Kidney (tissue), 22 donors: ENCODE measurements at regions of chr13 and their contacts with region 1.

Region 1: GRCh38 chr13:99176309-99177276 is 24.1 kb upstream of the UBAC2 start:
- DNase-seq: peak; percentile 77 to 90 (median 87)
- H3K4me3 ChIP-seq: peak overlapping the region in 1 of 3 donors; percentile 19
- H3K27ac ChIP-seq: no peak overlapping the region
- H3K4me1 ChIP-seq: peaks cover 0 to 4% (median 0%) of the 10 kb centered on the region in 3 donors
- H3K27me3 ChIP-seq: no peaks in the 10 kb centered on the region
- CTCF ChIP-seq: peak; percentile 90

Region 2: DNA sequence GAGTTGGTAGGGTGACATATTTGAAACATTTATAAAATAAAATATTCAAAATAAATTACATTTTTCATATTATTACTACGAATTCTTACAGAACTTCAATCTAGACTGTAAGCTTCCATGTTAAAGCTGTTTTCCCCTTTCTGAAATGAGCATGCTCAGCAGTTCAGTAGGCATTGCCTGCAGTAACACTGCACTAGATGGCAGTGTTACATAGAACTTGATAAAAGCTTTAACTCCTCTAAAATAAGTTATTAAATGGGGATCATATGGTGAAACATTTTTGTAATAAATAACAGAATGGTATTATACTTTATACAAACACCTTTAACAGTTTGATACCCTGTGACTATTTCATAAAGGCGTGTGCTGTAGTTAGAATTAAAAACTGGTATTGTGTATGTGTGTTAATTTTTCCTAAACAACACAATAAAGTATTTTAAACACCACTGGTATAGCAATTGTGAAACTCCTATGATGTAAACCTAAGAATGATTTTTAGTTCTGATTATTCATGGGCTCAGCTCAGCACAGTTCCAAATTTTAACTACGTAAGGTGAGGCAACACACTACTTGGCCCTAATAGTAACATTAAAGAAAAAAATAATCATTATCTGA is 93.1 kb after region 1 on chr13:
- intact Hi-C with region 1: loop called (anchors 10 kb)
- DNase-seq: peak in 2 of 5 donors; percentile 56 to 77
- H3K4me3 ChIP-seq: no peak overlapping the region
- H3K27ac ChIP-seq: no peak overlapping the region
- H3K4me1 ChIP-seq: peaks cover 0 to 5% (median 0%) of the 10 kb centered on the region in 3 donors
- H3K27me3 ChIP-seq: no peaks in the 10 kb centered on the region
- CTCF ChIP-seq: peak; percentile 71

Region 3: DNA sequence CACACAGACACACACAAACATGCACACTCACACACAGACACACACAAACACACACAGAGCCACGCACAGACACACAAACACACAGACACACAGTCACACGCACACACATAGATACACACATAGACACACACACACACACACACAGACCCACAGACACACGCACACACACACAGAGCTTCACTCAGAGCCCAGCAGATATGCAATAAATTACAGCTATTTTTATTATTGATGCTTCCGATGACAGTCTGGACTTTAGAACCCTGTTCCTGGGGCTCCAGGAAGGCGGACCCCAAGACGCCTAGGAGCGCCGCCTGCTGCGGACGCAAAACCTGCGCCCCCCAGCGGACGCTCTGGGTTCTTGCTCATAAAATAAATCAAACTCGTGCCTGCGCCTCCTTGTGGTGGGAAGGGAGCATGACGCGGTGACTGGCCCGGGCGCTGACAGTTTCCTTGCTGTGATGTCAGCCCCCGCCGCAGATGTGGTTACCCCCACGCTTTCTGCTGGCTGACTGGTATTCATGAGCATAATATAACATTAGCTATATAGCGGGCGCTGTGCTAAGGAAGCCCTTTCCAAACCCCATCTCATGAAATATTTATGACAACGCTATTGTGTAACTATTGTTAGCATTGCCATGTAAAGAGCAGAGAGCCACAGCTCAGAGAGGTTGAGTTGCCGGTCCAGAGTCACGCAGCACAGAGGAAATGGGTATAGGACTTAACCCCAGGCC is 260.3 kb after region 1 on chr13:
- intact Hi-C with region 1: loop called (anchors 10 kb)
- DNase-seq: peak; percentile 89 to 92 (median 91)
- H3K4me3 ChIP-seq: peak overlapping the region; percentile 10 to 37 (median 23)
- H3K27ac ChIP-seq: no peak overlapping the region
- H3K4me1 ChIP-seq: peaks cover 0 to 8% (median 0%) of the 10 kb centered on the region in 3 donors
- H3K27me3 ChIP-seq: no peaks in the 10 kb centered on the region
- CTCF ChIP-seq: peak; percentile 99